ENCODE measurements at regions of chr15 and their contacts with region 1.

Region 1: DNA sequence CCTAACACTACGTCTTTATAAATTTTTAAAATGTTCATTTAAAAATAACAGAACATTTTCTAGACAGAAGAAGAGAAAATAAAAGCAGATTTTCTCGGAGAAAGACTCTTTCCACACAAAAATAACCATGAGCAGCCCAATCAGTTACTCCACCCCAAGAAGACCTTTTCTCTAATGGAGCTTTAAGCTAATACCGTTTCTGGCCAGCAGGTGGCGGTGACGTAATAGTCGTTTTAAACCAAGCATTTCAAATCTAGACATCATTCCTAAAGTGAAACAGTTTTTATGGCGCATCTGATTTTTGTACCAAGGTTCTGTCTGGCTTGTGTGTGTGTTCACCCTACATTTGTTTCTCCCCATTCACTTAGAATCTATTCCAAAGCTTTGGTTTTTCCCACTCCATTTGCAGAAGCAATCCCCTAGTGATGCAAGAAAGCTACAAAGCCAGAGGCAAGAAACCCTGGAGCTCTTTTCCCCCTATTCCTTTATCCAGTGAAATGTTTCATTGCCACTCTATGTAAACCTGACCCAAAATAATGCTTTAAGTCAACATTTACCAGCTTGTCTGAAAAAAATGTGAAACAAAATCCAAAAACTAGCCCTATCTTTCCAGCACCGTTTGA is 336.7 kb upstream of the IGF1R start:
- DNase-seq: peak; percentile 62
- ATAC-seq: peak; percentile 56; the same call in 2 of the 3 replicates
- H3K4me3 ChIP-seq: no peak overlapping the region
- H3K27ac ChIP-seq: no peak overlapping the region
- H3K4me1 ChIP-seq: no peaks in the 10 kb centered on the region
- H3K27me3 ChIP-seq: peaks cover 0 to 7% of the 10 kb centered on the region in 2 experiments; a peak in 2 of 5 replicates
- CTCF ChIP-seq: peak; percentile 77
- EP300 ChIP-seq: no peak
- POLR2A ChIP-seq: no peak
- RAD21 ChIP-seq: peak; percentile 36; the same call in 1 of the 2 replicates

Region 2: GRCh38 chr15:98382139-98382538 is 70.5 kb after region 1 on chr15:
- CTCF ChIA-PET with region 1: no interaction called
- POLR2A ChIA-PET with region 1: no interaction called
- in situ Hi-C with region 1: no loop called
- intact Hi-C with region 1: loop called (anchors 1 kb)
- DNase-seq: no peak
- ATAC-seq: no peak
- H3K4me3 ChIP-seq: no peak overlapping the region
- H3K27ac ChIP-seq: no peak overlapping the region
- H3K4me1 ChIP-seq: no peaks in the 10 kb centered on the region
- H3K27me3 ChIP-seq: peaks cover 4 to 19% of the 10 kb centered on the region in 2 experiments; a peak in 3 of 5 replicates
- CTCF ChIP-seq: peak; percentile 27
- EP300 ChIP-seq: no peak
- POLR2A ChIP-seq: no peak
- RAD21 ChIP-seq: no peak

Region 3: GRCh38 chr15:98421419-98422129 is 109.9 kb after region 1 on chr15:
- CTCF ChIA-PET with region 1: interaction called, 39 read pairs
- POLR2A ChIA-PET with region 1: interaction called, 3 read pairs
- in situ Hi-C with region 1: loop called (anchors 5 kb)
- intact Hi-C with region 1: loop called (anchors 1 kb)
- DNase-seq: peak; percentile 11
- ATAC-seq: peak; percentile 90
- H3K4me3 ChIP-seq: no peak overlapping the region
- H3K27ac ChIP-seq: no peak overlapping the region
- H3K4me1 ChIP-seq: no peaks in the 10 kb centered on the region
- H3K27me3 ChIP-seq: peaks cover 7 to 42% of the 10 kb centered on the region in 2 experiments; a peak in 4 of 5 replicates
- CTCF ChIP-seq: peak; percentile 96
- EP300 ChIP-seq: no peak
- POLR2A ChIP-seq: no peak
- RAD21 ChIP-seq: peak; percentile 97

Region 4: DNA sequence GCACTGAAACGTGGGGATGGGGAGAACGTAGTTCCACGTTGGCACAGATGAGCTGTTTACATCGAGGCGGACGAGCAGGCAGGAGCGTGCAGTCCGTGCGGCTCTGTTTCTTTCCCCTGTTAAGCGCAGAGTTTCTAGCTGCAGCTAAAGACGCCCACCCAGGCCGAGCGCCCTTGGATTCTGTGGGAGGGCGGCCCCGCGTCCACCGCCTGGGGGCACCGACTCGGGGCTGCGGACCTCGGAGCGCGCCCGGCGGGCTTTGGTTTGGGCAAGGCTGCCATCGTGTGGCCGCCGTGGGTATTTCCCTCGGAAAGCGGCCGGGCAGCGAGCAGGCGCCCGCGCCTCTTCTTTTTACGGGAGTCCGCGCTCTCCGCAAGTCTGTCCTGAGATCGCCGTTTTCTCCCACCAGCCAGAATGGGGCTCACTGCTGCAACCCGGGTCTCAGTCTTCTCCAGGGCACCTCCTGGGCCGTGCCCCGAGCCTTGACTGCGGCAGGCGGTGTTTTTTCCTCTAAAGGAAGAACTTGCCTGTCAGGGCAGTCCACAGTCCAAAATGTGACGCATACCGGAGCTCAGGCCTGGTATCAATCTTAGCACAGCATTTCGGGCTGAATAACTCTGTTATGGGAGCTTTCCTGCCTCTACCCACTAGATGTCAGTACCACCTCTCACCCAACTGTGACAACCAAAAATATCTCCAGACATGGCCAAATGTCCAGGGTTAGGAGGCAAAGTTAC is 116.7 kb after region 1 on chr15:
- CTCF ChIA-PET with region 1: interaction called, 39 read pairs
- POLR2A ChIA-PET with region 1: no interaction called
- in situ Hi-C with region 1: loop called (anchors 5 kb)
- intact Hi-C with region 1: no loop called
- DNase-seq: peak; percentile 57
- ATAC-seq: peak; percentile 92
- H3K4me3 ChIP-seq: peak overlapping the region; percentile 39 to 65 (median 44); a peak in 5 of 6 replicates
- H3K27ac ChIP-seq: no peak overlapping the region
- H3K4me1 ChIP-seq: 0 out of 2 replicates have a peak, but pooled peaks cover 5% of the 10 kb centered on the region
- H3K27me3 ChIP-seq: peaks cover 0 to 37% of the 10 kb centered on the region in 2 experiments; a peak in 2 of 5 replicates
- CTCF ChIP-seq: peak; percentile 85
- EP300 ChIP-seq: no peak
- POLR2A ChIP-seq: no peak
- RAD21 ChIP-seq: peak; percentile 79